Posterior vena cava (tissue), 2 donors: ENCODE measurements at regions of chr1 and their contacts with region 1.

Region 1: GRCh38 chr1:40799351-40799867 is 15.8 kb downstream of the KCNQ4 start:
- DNase-seq: no peak

Region 2: DNA sequence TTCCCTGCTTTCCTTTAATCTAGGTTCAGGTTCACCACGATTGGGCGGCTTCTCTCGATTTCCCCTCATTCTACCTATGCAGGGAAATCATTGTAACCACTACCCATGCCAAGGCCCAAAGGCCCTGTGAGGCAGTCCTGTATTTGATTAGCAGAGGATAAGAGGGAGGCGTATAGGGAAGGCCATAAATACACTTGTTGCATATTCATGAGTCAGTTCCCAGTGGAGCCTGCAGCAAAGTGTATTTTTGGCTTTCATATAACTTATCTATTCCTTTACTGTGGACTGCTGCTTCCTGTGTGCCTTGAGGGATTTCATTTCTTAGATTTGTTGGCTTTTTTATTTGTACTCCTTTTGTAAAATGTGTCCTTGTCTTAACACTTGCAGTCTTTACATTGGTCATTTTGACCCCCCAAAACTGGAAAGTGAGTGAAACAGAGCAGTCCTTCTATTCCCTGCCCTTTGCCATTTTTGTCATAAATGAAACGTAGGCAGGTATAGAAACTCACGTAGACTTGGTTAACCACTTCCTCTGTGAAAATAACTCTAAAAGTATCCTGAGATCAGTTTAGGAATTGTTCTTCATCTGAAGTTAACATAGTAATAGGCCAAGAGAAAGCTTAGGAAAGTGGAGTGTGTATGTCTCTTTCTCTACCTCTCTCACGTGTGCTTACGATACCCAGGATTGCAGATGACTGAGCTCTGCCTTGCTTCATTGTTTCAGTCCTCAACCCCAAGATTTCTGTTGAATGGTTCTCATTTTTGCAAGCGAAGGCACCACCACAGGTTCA is 35.5 kb before region 1 on chr1:
- intact Hi-C with region 1: loop called in 1 of 2 experiments (anchors 2 kb)
- DNase-seq: no peak

Region 3: DNA sequence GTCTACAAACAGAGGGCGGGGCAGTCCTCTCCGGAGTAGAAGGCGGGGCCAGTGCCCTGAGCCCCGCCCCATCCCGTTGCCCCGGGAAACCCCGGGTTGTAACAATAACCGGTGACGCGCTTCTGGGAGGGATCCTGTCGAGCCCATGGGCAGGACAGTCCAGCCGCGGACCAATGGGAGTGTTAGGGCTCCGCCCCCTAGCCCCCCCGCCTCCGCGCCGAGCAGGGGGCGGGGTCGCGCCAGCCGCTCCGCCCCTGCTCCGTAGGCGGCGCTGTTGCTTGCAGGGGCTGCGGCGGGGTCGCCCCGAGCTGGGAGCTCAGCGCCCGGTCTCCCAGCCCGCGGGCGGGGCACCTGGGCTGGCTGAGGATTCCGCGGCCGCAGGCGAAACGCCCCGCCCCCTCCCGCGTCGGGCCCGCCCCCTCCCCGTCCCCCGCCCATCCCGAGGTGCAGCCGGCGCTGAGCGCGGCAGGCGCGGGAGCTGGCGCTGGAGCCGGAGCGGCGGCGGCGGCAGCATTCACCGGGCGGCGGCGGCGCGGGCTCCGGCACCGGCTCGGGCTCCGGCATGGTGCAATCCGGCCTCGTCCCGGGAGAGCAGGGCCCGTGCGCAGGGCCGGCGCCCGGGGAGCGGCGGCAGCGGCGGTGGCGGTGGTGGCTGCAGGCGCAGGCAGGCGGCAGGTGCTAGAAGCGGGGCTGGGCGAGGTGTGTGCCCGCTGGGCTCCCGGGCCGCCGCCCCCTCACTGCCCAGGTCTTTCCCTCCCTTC is 561.8 kb after region 1 on chr1 and contains the start of gene FOXO6:
- intact Hi-C with region 1: loop called in 1 of 2 experiments (anchors 5 kb)
- DNase-seq: peak; percentile 99
- total RNA-seq, gene FOXO6: 0.62 to 0.83 TPM